Panc1 (cell line): ENCODE measurements at regions of chr6 and their contacts with region 1.

Region 1: GRCh38 chr6:140281236-140281635 is 906.8 kb upstream of the CITED2 start:
- DNase-seq: no peak
- ATAC-seq: no peak
- H3K4me3 ChIP-seq: no peak overlapping the region
- H3K27ac ChIP-seq: no peak overlapping the region
- H3K4me1 ChIP-seq: no peaks in the 10 kb centered on the region
- H3K27me3 ChIP-seq: no peaks in the 10 kb centered on the region
- CTCF ChIP-seq: no peak

Region 2: DNA sequence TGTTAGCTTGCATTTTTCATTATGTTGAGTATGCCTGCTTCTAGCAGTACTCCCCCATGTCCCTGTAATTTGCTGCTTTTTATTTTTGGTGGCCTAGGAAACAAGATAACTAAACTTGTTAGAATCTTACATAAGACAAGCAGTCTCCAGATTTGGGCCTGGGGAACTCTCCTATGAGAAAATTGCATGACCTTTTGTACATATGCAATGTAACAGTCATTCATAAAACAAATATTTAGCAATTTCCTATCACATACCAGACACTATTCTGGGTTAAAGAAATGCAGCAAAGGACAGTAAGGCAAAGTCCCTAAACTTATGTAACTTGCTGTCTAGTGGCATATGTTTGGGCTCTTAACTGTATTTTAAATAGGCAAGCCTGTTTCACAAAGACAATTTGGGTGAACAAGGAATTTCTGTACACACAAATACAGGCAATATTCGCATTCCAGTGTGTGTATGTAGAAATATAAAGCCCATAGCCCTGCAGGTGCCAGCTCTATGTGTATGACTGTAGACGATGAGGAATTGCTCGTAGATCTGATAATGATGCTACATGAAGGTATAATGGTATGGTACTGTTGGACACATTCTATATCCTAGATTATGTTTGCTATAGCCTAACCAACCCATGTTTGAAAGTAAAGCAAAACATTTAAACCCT is 601.6 kb before region 1 on chr6:
- CTCF ChIA-PET with region 1: no interaction called
- POLR2A ChIA-PET with region 1: interaction called, 13 read pairs
- in situ Hi-C with region 1: no loop called
- intact Hi-C with region 1: no loop called
- DNase-seq: peak; percentile 18
- ATAC-seq: no peak
- H3K4me3 ChIP-seq: no peak overlapping the region
- H3K27ac ChIP-seq: peak overlapping the region; percentile 56; the same call in 1 of the 2 replicates
- H3K4me1 ChIP-seq: peaks cover 4% of the 10 kb centered on the region; the same call in 1 of the 2 replicates
- H3K27me3 ChIP-seq: no peaks in the 10 kb centered on the region
- CTCF ChIP-seq: no peak

Region 3: GRCh38 chr6:140203661-140204147 is 77.5 kb before region 1 on chr6:
- CTCF ChIA-PET with region 1: no interaction called
- POLR2A ChIA-PET with region 1: no interaction called
- in situ Hi-C with region 1: no loop called
- intact Hi-C with region 1: no loop called
- DNase-seq: no peak
- ATAC-seq: no peak
- H3K4me3 ChIP-seq: no peak overlapping the region
- H3K27ac ChIP-seq: no peak overlapping the region; the same call in 1 of the 2 replicates
- H3K4me1 ChIP-seq: no peaks in the 10 kb centered on the region
- H3K27me3 ChIP-seq: no peaks in the 10 kb centered on the region
- CTCF ChIP-seq: no peak

Region 4: DNA sequence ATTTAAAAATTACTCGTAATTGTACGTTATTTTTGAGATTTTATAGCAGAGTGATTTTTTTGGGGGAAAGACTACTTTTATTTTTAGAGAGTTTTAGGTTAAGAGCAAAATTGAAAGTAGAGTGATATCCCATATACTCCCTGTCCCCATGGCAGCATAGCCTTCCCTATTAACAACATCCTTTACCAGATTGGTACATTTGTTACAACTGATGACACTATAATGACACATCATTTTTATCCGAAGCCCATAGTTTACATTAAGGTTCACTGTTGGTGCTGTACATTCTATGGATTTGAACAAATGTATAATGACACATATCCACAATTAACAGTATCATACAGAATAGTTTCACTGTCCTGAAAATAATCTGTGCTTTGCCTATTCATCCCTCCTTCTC is 219.6 kb after region 1 on chr6:
- CTCF ChIA-PET with region 1: no interaction called
- POLR2A ChIA-PET with region 1: no interaction called
- in situ Hi-C with region 1: no loop called
- intact Hi-C with region 1: no loop called
- DNase-seq: no peak
- ATAC-seq: no peak
- H3K4me3 ChIP-seq: no peak overlapping the region
- H3K27ac ChIP-seq: no peak overlapping the region
- H3K4me1 ChIP-seq: no peaks in the 10 kb centered on the region
- H3K27me3 ChIP-seq: no peaks in the 10 kb centered on the region
- CTCF ChIP-seq: no peak

Region 5: GRCh38 chr6:140677781-140678528 is 396.7 kb after region 1 on chr6:
- CTCF ChIA-PET with region 1: no interaction called
- POLR2A ChIA-PET with region 1: no interaction called
- in situ Hi-C with region 1: no loop called
- intact Hi-C with region 1: no loop called
- DNase-seq: no peak
- ATAC-seq: no peak
- H3K4me3 ChIP-seq: no peak overlapping the region
- H3K27ac ChIP-seq: no peak overlapping the region
- H3K4me1 ChIP-seq: no peaks in the 10 kb centered on the region
- H3K27me3 ChIP-seq: no peaks in the 10 kb centered on the region
- CTCF ChIP-seq: no peak